MCF 10A (cell line): ENCODE measurements at regions of chr15 and their contacts with region 1.

Region 1: GRCh38 chr15:98647774-98648653 is at the start of gene IGF1R:
- DNase-seq: peak; percentile 83
- H3K4me3 Mint-ChIP-seq: peak within 1 kb of the TSS; percentile 89
- H3K27ac Mint-ChIP-seq: peak within 1 kb of the TSS; percentile 83
- H3K4me1 Mint-ChIP-seq: peaks cover 14% of the 10 kb centered on the region
- H3K27me3 Mint-ChIP-seq: peaks cover 43% of the 10 kb centered on the region
- CTCF ChIP-seq: no peak
- total RNA-seq, gene IGF1R: 50.7 and 53.3 TPM in 2 replicates

Region 2: DNA sequence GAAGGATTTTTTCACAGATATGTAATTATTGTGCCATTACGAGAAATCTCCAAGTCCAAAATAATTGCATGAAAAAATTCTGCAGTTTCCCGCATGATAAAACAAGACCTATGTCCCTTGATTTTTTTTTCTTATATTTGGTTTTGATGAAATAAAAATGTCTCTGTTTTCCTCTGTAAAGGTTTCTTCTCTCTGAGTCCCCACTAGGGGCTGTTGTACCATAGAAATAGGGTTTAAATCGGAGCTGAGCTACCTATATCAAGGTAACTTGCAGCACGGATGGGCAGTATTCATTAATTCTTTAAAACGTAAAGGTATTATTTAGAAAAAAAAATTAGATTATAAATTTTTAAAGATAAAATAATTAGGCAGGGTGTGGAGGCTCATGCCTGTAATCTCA is 66.3 kb before region 1 on chr15:
- CTCF ChIA-PET with region 1: interaction called, 3 read pairs
- POLR2A ChIA-PET with region 1: interaction called, 4 read pairs
- intact Hi-C with region 1: loop called (anchors 5 kb)
- DNase-seq: no peak
- H3K4me3 Mint-ChIP-seq: no peak overlapping the region
- H3K27ac Mint-ChIP-seq: no peak overlapping the region
- H3K4me1 Mint-ChIP-seq: no peaks in the 10 kb centered on the region
- H3K27me3 Mint-ChIP-seq: peaks cover 68% of the 10 kb centered on the region
- CTCF ChIP-seq: peak; percentile 25

Region 3: GRCh38 chr15:98684436-98684835 is 36.4 kb after region 1 on chr15:
- CTCF ChIA-PET with region 1: interaction called, 5 read pairs
- POLR2A ChIA-PET with region 1: interaction called, 15 read pairs
- intact Hi-C with region 1: loop called (anchors 2 kb)
- DNase-seq: peak; percentile 72
- H3K4me3 Mint-ChIP-seq: peak overlapping the region; percentile 53
- H3K27ac Mint-ChIP-seq: peak overlapping the region; percentile 95
- H3K4me1 Mint-ChIP-seq: peaks cover 59% of the 10 kb centered on the region
- H3K27me3 Mint-ChIP-seq: no peaks in the 10 kb centered on the region
- CTCF ChIP-seq: no peak

Region 4: DNA sequence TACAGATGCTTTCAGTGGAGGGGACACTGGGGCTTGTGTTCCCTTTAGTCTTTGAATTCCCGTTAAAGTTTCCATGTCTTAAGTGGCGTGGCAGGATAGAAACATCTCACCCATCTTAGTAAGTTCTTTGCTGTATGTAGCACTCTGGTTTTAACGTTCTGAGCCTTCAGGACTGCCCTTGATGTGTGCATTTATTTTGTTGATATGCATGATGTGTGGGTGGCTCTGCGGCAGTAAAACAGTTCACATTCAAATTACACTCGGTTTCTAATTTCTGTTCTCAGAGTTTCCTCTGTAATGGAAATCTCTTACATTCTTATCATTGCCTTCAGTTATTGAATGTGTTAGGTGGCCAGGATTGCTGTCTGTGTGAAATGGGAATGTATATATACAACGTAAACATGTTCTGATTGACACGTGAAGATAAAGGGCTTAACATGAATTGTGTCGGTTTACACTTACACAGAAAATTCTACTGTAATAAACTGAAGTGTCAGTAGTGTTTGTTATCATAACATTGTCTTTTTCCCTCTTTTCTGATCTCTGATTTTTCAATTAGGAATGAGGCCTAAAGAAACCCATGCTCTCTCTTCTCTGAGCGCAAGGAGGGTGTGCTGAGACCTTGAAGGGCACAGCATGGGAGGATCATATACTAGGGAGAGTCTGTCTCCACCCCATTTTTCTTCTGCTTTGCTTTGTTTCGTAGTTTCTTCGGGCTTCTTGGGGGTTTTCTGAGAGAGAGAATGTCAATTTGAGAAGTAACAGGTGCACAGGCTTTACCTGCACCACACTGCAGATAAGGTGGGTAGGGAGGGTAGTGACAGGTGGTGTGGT is 51.8 kb after region 1 on chr15:
- CTCF ChIA-PET with region 1: no interaction called
- POLR2A ChIA-PET with region 1: no interaction called
- intact Hi-C with region 1: no loop called
- DNase-seq: no peak
- H3K4me3 Mint-ChIP-seq: no peak overlapping the region
- H3K27ac Mint-ChIP-seq: no peak overlapping the region
- H3K4me1 Mint-ChIP-seq: peaks cover 28% of the 10 kb centered on the region
- H3K27me3 Mint-ChIP-seq: no peaks in the 10 kb centered on the region
- CTCF ChIP-seq: no peak

Region 5: DNA sequence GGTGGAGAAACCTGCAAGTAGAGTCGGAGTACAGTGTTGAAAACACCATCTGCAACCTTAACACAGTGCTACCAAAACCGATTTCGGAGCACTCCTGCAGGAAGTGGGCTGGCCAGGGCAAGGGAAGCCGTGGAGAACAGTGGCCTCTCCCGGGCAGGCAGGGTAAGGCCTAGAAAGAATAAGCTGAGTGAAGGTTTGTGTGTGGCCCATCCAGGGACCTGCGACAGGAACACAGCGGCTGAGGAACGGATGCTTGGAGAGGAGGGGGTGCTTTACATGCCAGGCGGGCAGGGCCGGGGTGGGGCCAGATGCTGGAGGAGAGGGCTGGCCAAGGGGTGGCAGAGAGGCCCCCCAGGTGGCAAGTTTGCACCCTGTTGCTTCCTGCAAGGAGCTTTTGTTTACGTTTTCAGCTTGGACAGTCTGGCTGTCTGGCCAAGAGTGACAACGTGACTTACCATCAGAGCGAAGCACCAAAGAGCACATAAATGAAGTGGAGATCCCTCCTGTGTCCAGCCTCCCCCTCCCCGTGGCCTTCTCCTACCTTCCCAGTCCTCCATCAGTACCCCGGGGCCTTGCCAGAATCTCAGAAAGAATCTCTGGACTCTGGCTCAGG is 203.1 kb after region 1 on chr15:
- CTCF ChIA-PET with region 1: interaction called, 3 read pairs
- POLR2A ChIA-PET with region 1: interaction called, 10 read pairs
- intact Hi-C with region 1: loop called (anchors 1 kb)
- DNase-seq: peak; percentile 63
- H3K4me3 Mint-ChIP-seq: peak overlapping the region; percentile 76
- H3K27ac Mint-ChIP-seq: peak overlapping the region; percentile 74
- H3K4me1 Mint-ChIP-seq: peaks cover 27% of the 10 kb centered on the region
- H3K27me3 Mint-ChIP-seq: no peaks in the 10 kb centered on the region
- CTCF ChIP-seq: peak; percentile 24

Region 6: GRCh38 chr15:98881526-98882520 is 233.8 kb after region 1 on chr15:
- CTCF ChIA-PET with region 1: interaction called, 8 read pairs
- POLR2A ChIA-PET with region 1: interaction called, 14 read pairs
- intact Hi-C with region 1: no loop called
- DNase-seq: peak; percentile 75
- H3K4me3 Mint-ChIP-seq: no peak overlapping the region
- H3K27ac Mint-ChIP-seq: peak overlapping the region; percentile 59
- H3K4me1 Mint-ChIP-seq: peaks cover 20% of the 10 kb centered on the region
- H3K27me3 Mint-ChIP-seq: no peaks in the 10 kb centered on the region
- CTCF ChIP-seq: peak; percentile 53

Region 7: GRCh38 chr15:99014803-99015676 is 367.0 kb after region 1 on chr15:
- CTCF ChIA-PET with region 1: no interaction called
- POLR2A ChIA-PET with region 1: no interaction called
- intact Hi-C with region 1: loop called (anchors 5 kb)
- DNase-seq: peak; percentile 82
- H3K4me3 Mint-ChIP-seq: peak overlapping the region; percentile 67
- H3K27ac Mint-ChIP-seq: no peak overlapping the region
- H3K4me1 Mint-ChIP-seq: peaks cover 6% of the 10 kb centered on the region
- H3K27me3 Mint-ChIP-seq: no peaks in the 10 kb centered on the region
- CTCF ChIP-seq: no peak